ENCODE measurements at regions of chrX and their contacts with region 1.

Region 1: DNA sequence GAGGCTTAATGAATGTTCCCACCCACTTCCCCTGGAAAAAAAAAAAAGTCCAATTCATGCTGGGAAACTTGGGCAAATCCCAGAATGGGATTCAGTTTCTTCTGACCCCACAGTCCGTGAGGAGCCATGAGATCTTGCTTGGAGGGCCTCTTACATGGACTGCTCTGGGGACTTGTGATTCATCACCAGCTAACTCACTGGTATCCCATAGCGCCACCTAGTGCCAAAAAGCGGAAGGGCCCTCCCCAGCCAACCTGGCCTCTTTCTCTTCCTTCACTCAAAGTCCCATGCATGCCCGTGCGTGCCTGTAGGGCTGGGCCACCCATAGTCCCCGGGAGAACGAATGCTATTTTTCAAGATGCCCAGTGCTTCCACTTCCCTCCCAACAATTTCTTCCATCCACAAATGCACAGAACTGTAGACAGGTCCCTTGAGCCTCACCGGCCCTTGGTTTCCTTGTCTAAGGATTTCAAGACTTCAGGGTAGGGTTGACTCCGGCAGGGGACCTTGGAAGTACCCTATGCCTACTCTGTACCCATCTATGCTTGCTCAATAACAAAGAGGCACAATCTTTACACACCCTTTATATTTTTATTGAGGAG is 5.1 kb downstream of the RTL5 start:
- DNase-seq: peak; percentile 95
- H3K4me3 ChIP-seq: no peak overlapping the region
- H3K27ac ChIP-seq: peak overlapping the region; percentile 79 to 83 (median 80)
- H3K4me1 ChIP-seq: peaks cover 29 to 94% (median 90%) of the 10 kb centered on the region in 4 donors
- H3K27me3 ChIP-seq: peaks cover 0 to 3% (median 0%) of the 10 kb centered on the region in 4 donors
- CTCF ChIP-seq: peak; percentile 84 to 86 (median 85)
- EP300 ChIP-seq: no peak
- POLR2A ChIP-seq: no peak

Region 2: DNA sequence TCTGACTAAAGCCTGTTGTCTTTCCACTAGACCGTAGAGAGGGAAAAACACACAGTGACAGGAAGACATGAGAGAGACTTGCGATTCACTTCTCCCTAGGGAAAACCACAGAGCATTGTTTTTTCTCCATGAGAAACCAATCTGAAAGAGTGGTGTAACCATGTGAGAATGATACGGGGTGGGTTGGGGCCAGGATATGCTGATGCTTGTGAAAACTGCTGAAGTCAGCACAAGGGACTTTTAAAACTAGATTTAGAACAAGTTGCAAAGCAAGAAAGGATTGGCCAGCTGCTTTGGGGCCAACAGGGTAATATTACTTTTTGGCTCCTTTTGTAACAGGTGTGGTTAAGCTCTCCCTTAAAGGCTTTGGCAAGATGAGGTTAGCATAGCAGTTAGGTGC is 149.9 kb before region 1 on chrX:
- intact Hi-C with region 1: no loop called
- DNase-seq: no peak
- H3K4me3 ChIP-seq: no peak overlapping the region
- H3K27ac ChIP-seq: no peak overlapping the region
- H3K4me1 ChIP-seq: no peaks in the 10 kb centered on the region
- H3K27me3 ChIP-seq: no peaks in the 10 kb centered on the region
- CTCF ChIP-seq: no peak
- EP300 ChIP-seq: no peak
- POLR2A ChIP-seq: no peak

Region 3: GRCh38 chrX:72018277-72019112 is 108.1 kb before region 1 on chrX:
- intact Hi-C with region 1: loop called (anchors 2 kb)
- DNase-seq: peak; percentile 93
- H3K4me3 ChIP-seq: peak overlapping the region; percentile 36 to 51 (median 40)
- H3K27ac ChIP-seq: peak overlapping the region; percentile 72 to 82 (median 77)
- H3K4me1 ChIP-seq: peaks cover 7 to 34% (median 29%) of the 10 kb centered on the region in 4 donors
- H3K27me3 ChIP-seq: no peaks in the 10 kb centered on the region
- CTCF ChIP-seq: peak; percentile 68 to 86 (median 84)
- EP300 ChIP-seq: no peak
- POLR2A ChIP-seq: no peak